ENCODE measurements at regions of chr13 and their contacts with region 1.

Region 1: GRCh38 chr13:46552889-46553510 is at the start of gene LRCH1:
- DNase-seq: peak; percentile 93
- ATAC-seq: peak; percentile 90
- H3K4me3 Mint-ChIP-seq: peak within 1 kb of the TSS; percentile 95
- H3K27ac Mint-ChIP-seq: peak within 1 kb of the TSS; percentile 88
- H3K4me1 Mint-ChIP-seq: peaks cover 41% of the 10 kb centered on the region
- H3K27me3 Mint-ChIP-seq: peaks cover 5% of the 10 kb centered on the region
- total RNA-seq, gene LRCH1: 15.3 to 18.0 TPM

Region 2: DNA sequence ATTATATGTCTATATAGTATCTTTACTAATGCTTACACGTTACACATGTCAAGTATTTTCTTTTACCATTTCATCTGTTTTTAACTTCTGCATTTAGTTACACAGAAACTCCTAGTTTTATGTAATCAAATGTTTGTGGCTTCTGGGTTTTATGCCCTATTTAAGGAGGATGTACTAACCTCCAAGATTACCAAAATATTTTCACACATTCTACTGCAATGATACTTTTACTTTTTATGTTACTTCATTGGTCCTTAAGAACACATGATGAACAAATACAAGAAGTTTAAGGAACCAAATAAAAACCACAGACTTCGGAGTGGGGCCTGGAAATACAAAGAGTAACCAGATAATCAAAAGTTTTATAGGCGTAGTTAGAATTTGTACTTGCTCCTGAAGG is 537.6 kb before region 1 on chr13:
- CTCF ChIA-PET with region 1: no interaction called
- POLR2A ChIA-PET with region 1: no interaction called
- DNase-seq: no peak
- ATAC-seq: no peak
- H3K4me3 Mint-ChIP-seq: no peak overlapping the region
- H3K27ac Mint-ChIP-seq: no peak overlapping the region
- H3K4me1 Mint-ChIP-seq: no peaks in the 10 kb centered on the region
- H3K27me3 Mint-ChIP-seq: no peaks in the 10 kb centered on the region

Region 3: DNA sequence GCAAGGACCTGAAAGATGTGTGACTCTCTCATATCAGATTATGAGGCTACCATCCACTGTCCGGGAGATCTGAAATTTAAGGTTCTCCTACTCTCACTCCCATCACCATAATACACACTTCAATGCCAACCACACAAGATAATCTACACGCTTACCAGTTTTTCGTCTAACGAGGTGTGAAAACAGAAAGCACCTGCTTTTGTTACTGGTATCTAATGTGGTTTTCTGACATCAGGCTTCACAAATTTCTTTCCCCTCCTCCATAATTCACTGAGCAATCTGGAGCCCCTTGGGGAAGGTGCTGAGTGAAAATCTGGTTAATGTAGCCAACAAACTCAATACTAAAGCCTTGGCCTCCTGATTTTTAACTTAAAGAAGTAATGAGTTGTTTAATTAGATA is 10.2 kb before region 1 on chr13:
- CTCF ChIA-PET with region 1: interaction called, 22 read pairs
- POLR2A ChIA-PET with region 1: no interaction called
- DNase-seq: no peak
- ATAC-seq: no peak
- H3K4me3 Mint-ChIP-seq: no peak overlapping the region
- H3K27ac Mint-ChIP-seq: no peak overlapping the region
- H3K4me1 Mint-ChIP-seq: peaks cover 4% of the 10 kb centered on the region
- H3K27me3 Mint-ChIP-seq: peaks cover 6% of the 10 kb centered on the region

Region 4: GRCh38 chr13:46587807-46588418 is 34.9 kb after region 1 on chr13:
- CTCF ChIA-PET with region 1: interaction called, 21 read pairs
- POLR2A ChIA-PET with region 1: no interaction called
- DNase-seq: no peak
- ATAC-seq: no peak
- H3K4me3 Mint-ChIP-seq: no peak overlapping the region
- H3K27ac Mint-ChIP-seq: no peak overlapping the region
- H3K4me1 Mint-ChIP-seq: peaks cover 36% of the 10 kb centered on the region
- H3K27me3 Mint-ChIP-seq: no peaks in the 10 kb centered on the region

Region 5: DNA sequence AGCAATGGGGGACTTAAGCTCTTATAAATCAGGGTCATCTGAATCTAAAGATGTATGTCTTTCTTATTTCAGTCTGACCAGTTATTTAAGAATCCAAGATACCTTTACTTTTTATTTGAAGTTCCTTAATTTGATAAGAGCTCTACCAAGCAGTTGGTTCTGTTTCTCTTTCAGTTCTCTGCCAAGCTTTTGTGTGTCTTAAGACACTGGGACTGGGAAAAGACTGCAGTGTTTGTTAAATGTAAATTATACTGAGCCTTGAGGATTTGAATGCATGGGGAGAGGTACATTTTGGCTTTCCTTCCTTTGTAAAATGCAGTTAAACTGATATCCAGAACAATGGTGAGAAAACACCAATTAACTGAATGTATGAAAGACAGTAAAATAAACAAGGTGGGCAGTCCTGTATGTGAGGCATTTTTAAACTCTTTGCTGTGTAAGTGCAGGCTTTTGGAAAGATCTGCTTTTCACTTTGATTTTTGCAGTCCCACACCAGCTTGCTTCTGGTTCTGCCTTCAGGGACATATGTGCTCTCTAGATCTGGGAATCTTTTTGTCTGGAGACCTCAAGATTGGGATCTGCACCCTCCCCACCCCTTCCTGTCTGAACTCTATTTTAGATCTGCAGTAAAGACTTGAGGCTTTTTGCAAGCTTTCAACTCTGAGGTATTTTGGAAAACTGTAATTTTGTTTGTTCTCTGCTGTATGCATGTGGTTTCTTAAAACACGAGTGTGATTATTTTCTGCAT is 77.6 kb after region 1 on chr13:
- CTCF ChIA-PET with region 1: interaction called, 10 read pairs
- POLR2A ChIA-PET with region 1: no interaction called
- DNase-seq: no peak
- ATAC-seq: no peak
- H3K4me3 Mint-ChIP-seq: no peak overlapping the region
- H3K27ac Mint-ChIP-seq: peak overlapping the region; percentile 31
- H3K4me1 Mint-ChIP-seq: peaks cover 21% of the 10 kb centered on the region
- H3K27me3 Mint-ChIP-seq: no peaks in the 10 kb centered on the region

Region 6: DNA sequence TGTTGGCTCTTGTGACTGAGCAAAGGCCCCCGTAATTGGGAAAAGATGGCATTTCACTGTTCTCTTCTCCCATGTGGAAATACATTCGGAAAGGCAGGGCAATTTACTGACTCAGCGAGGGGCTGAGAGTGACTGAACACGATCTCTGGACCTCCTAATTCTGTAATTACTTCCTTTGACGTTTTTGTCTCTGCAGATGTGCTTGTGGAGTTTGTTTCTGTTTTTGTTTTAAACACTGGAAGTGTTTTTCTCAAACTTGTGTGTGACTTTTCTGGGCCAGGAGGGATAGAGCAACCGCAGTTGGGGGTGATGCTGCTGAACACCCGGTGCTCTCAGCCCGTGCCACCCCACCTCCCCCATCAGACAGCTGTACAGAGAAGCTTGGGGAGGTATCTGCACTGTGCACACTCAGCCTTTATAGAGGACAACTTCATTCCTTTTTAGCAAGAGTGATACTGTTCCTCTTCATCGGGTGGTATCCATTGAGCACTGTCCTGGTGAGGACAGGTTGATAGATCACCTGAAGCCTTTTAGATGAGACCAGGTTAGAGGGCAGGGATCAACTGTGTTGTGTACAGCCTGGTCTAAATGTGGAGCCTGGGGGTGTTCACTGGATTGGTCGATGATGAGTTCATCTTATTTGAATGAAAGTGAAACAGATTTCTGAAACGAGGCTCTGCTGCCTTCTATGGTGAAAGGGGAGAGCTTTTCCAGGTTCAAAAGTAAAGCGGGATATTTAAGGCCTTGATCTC is 126.5 kb after region 1 on chr13:
- CTCF ChIA-PET with region 1: interaction called, 29 read pairs
- POLR2A ChIA-PET with region 1: interaction called, 3 read pairs
- DNase-seq: peak; percentile 61
- ATAC-seq: peak; percentile 93
- H3K4me3 Mint-ChIP-seq: no peak overlapping the region
- H3K27ac Mint-ChIP-seq: no peak overlapping the region
- H3K4me1 Mint-ChIP-seq: peaks cover 29% of the 10 kb centered on the region
- H3K27me3 Mint-ChIP-seq: no peaks in the 10 kb centered on the region

Region 7: DNA sequence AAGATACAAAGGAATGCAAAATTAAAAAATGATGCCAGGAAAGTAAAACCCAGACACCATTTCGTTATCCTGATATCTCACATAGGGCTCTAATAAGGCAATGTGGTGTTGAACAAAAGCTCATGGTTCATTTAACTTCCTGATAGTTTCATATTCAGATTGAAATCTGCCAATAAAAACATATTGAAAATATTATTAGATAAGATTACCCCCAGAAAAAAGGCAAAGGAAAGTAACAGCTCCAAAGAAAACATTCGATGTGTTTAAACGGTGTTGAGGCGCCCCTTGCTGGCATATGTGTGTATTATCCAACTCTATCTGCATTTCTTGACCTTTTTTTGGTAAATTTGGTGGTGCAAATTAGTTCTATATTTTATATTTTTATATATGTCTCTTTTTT is 168.1 kb after region 1 on chr13:
- CTCF ChIA-PET with region 1: interaction called, 94 read pairs
- POLR2A ChIA-PET with region 1: interaction called, 7 read pairs
- DNase-seq: peak; percentile 61
- ATAC-seq: no peak
- H3K4me3 Mint-ChIP-seq: no peak overlapping the region
- H3K27ac Mint-ChIP-seq: no peak overlapping the region
- H3K4me1 Mint-ChIP-seq: peaks cover 17% of the 10 kb centered on the region
- H3K27me3 Mint-ChIP-seq: no peaks in the 10 kb centered on the region

Measured in activated CD8-positive, alpha-beta T cell treated with anti-CD3 and anti-CD28 coated beads, Interleukin-2, amount 10 ng/mL, durations not matched to agents 7 days and 5 days (primary cell).